Activated B cell treated with CpG ODN at 0.5 μM for 24 hours (primary cell): ENCODE measurements at regions of chr7 and their contacts with region 1.

Region 1: GRCh38 chr7:23546897-23547572 is 15.3 kb upstream of the TRA2A start:
- DNase-seq: peak; percentile 40
- ATAC-seq: peak; percentile 91
- H3K4me3 Mint-ChIP-seq: no peak overlapping the region
- H3K27ac Mint-ChIP-seq: no peak overlapping the region
- H3K4me1 Mint-ChIP-seq: peaks cover 18% of the 10 kb centered on the region
- H3K27me3 Mint-ChIP-seq: no peaks in the 10 kb centered on the region
- CTCF ChIP-seq: no peak

Region 2: DNA sequence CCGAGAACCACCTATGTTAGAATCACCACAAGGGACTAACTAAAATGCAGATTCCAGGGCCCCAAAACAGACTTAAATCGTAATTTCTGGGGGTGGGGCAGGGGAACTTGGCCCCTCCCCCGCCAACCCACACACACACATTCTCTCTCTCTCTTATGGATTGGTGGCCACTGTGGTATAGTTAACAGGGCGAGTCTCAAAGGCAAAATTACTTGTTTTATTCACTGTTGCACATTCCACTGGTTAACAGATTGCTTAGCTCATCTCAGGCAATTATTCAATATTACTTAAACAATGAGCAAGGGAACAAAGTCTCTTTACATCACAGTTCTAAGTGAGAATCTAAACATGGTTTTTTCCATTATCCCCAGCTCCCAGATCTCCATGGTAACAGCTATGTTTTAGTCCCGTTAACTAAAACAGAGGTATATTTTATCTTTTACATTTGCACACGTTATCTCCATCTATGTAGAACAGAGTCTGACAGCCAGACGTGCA is 115.3 kb before region 1 on chr7:
- CTCF ChIA-PET with region 1: interaction called, 6 read pairs
- POLR2A ChIA-PET with region 1: no interaction called
- intact Hi-C with region 1: loop called (anchors 1 kb)
- DNase-seq: no peak
- ATAC-seq: no peak
- H3K4me3 Mint-ChIP-seq: no peak overlapping the region
- H3K27ac Mint-ChIP-seq: no peak overlapping the region
- H3K4me1 Mint-ChIP-seq: no peaks in the 10 kb centered on the region
- H3K27me3 Mint-ChIP-seq: peaks cover 5% of the 10 kb centered on the region
- CTCF ChIP-seq: no peak

Region 3: GRCh38 chr7:23712368-23713284 is 165.6 kb after region 1 on chr7:
- CTCF ChIA-PET with region 1: interaction called, 29 read pairs
- POLR2A ChIA-PET with region 1: no interaction called
- intact Hi-C with region 1: loop called (anchors 1 kb)
- DNase-seq: no peak
- ATAC-seq: no peak
- H3K4me3 Mint-ChIP-seq: no peak overlapping the region
- H3K27ac Mint-ChIP-seq: no peak overlapping the region
- H3K4me1 Mint-ChIP-seq: no peaks in the 10 kb centered on the region
- H3K27me3 Mint-ChIP-seq: no peaks in the 10 kb centered on the region
- CTCF ChIP-seq: no peak

Region 4: GRCh38 chr7:23767514-23767913 is 220.5 kb after region 1 on chr7:
- CTCF ChIA-PET with region 1: no interaction called
- POLR2A ChIA-PET with region 1: no interaction called
- intact Hi-C with region 1: no loop called
- DNase-seq: no peak
- ATAC-seq: no peak
- H3K4me3 Mint-ChIP-seq: no peak overlapping the region
- H3K27ac Mint-ChIP-seq: no peak overlapping the region
- H3K4me1 Mint-ChIP-seq: no peaks in the 10 kb centered on the region
- H3K27me3 Mint-ChIP-seq: no peaks in the 10 kb centered on the region
- CTCF ChIP-seq: no peak